ENCODE measurements at regions of chr6 and their contacts with region 1.

Region 1: GRCh38 chr6:150620244-150620643 is 20.6 kb downstream of the PLEKHG1 start:
- DNase-seq: no peak
- H3K4me3 Mint-ChIP-seq: no peak overlapping the region
- H3K27ac Mint-ChIP-seq: no peak overlapping the region
- H3K4me1 Mint-ChIP-seq: peaks cover 6% of the 10 kb centered on the region
- H3K27me3 Mint-ChIP-seq: peaks cover 25% of the 10 kb centered on the region

Region 2: DNA sequence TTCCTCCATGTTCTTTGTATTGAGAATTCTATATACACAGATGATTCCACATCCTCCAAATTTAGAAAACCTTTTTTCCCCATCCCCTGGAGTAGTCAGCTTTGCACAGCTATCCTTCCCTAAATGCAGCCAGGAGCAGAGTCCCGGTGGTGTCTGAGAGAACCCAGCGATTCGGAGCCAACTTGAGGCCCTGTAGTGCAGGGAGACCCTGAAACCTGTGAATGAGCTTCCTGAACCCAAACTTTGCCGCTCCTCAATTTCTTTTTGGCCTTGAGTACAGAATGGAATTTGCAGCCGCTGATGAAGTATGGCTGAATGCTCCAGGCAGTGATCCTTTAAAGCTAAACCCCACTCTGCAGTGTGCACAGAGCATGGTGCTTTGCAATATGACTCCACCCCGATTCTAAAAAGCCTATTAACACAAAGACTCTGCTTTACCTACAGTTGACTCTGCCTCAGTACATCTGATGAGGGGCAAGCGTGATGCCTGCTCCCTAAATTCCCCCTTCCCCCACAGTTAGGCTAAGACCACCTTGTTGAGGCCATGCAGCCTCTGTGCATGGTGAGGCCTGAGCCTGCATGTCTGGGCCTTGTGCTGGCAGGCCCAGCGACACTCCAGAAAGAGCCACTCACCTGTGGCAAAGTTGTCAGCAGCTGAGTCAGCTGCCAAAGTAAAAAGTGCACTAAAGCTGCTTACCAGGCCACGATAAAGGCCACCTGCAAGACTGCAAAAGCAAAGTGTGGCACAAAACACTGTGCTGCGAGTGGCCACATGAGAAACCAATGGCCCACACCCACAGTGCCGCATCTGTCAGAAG is 61.5 kb after region 1 on chr6:
- intact Hi-C with region 1: loop called (anchors 2 kb)
- DNase-seq: no peak
- H3K4me3 Mint-ChIP-seq: no peak overlapping the region
- H3K27ac Mint-ChIP-seq: no peak overlapping the region
- H3K4me1 Mint-ChIP-seq: no peaks in the 10 kb centered on the region
- H3K27me3 Mint-ChIP-seq: peaks cover 3% of the 10 kb centered on the region

Measured in activated T-helper 1 cell treated with anti-CD3 and anti-CD28 coated beads, Interleukin-12 subunit alpha, Interleukin-12 subunit beta, Interleukin-2, Interleukin-4 antibody, amounts not matched to agents 30 ng/mL and 10 ng/mL and 1 ng/mL, durations not matched to agents 14 hours and 24 hours and 36 hours (primary cell).